A549 (cell line): ENCODE measurements at regions of chr6 and their contacts with region 1.

Region 1: DNA sequence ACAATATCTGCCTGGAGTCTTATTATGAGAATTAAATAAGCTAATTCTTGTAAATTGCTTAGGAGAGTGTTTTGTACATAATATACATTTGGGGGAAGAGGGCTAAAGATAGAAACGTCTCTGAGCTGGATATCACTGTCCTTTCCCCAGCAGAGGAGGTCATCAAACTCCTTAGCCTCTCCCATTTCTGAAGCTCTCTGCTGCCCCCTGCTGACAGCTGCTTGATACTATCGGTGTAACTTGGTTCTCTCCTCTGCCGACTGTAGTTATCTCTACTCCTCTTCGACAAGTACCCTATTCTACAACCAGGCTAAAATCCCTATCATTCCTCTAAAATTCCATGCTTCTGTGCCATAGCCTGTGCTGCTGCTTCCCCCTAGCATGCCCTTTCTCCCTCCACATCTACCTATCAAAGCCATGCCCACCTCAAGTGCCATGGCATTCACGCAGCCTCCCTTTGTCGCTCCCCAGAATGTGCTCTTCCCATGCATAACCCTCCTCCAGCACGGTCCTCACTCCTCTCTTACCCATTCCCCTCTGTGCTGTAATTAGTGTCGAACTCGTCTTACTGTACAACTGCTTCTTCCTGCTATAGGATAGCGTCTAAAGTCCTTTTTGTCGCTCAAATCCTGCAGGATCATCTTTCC is 101.2 kb downstream of the EPM2A start:
- DNase-seq: peak; percentile 36 to 66
- ATAC-seq: peak; percentile 94 to 96
- H3K4me3 ChIP-seq: no peak overlapping the region
- H3K27ac ChIP-seq: no peak overlapping the region
- H3K4me1 ChIP-seq: no peaks in the 10 kb centered on the region
- CTCF ChIP-seq: peak; percentile 71
- EP300 ChIP-seq: no peak
- POLR2A ChIP-seq: no peak
- RAD21 ChIP-seq: peak; percentile 78

Region 2: DNA sequence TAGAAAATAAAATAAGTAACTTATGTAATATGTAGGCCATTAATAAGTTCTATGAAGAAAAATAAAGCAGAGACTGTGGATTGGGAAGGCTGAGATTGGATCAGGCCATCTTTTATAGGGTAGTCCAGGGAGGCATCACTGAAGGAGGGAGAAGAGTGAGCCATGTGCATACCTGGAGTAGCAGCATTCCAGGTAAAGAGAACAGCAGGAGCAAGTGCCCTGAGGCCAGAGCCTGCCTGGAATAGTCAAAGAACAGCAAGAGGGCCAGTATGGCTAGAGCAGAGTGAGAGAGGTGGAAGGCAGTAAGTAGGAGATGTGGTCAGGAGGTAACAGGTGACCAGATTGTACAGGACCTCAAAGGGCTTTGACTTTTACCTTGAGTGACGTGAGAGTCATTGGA is 10.9 kb before region 1 on chr6:
- CTCF ChIA-PET with region 1: interaction called, 13 read pairs
- POLR2A ChIA-PET with region 1: no interaction called
- DNase-seq: no peak
- ATAC-seq: no peak
- H3K4me3 ChIP-seq: no peak overlapping the region
- H3K27ac ChIP-seq: no peak overlapping the region
- H3K4me1 ChIP-seq: no peaks in the 10 kb centered on the region
- CTCF ChIP-seq: no peak
- EP300 ChIP-seq: no peak
- POLR2A ChIP-seq: no peak
- RAD21 ChIP-seq: no peak

Region 3: GRCh38 chr6:145649539-145649938 is 15.4 kb after region 1 on chr6:
- CTCF ChIA-PET with region 1: interaction called, 12 read pairs
- POLR2A ChIA-PET with region 1: no interaction called
- DNase-seq: no peak
- ATAC-seq: no peak
- H3K4me3 ChIP-seq: no peak overlapping the region
- H3K27ac ChIP-seq: no peak overlapping the region
- H3K4me1 ChIP-seq: no peaks in the 10 kb centered on the region
- CTCF ChIP-seq: no peak
- EP300 ChIP-seq: no peak
- POLR2A ChIP-seq: no peak
- RAD21 ChIP-seq: no peak